Activated T-helper 2 cell treated with anti-CD3 and anti-CD28 coated beads, Interferon-gamma antibody, Interleukin-2, Interleukin-4, amounts not matched to agents 10 μg/mL and 5 μg/mL and 100 μg/mL, durations not matched to agents 14 hours and 24 hours and 36 hours (primary cell): ENCODE measurements at regions of chr7 and their contacts with region 1.

Region 1: DNA sequence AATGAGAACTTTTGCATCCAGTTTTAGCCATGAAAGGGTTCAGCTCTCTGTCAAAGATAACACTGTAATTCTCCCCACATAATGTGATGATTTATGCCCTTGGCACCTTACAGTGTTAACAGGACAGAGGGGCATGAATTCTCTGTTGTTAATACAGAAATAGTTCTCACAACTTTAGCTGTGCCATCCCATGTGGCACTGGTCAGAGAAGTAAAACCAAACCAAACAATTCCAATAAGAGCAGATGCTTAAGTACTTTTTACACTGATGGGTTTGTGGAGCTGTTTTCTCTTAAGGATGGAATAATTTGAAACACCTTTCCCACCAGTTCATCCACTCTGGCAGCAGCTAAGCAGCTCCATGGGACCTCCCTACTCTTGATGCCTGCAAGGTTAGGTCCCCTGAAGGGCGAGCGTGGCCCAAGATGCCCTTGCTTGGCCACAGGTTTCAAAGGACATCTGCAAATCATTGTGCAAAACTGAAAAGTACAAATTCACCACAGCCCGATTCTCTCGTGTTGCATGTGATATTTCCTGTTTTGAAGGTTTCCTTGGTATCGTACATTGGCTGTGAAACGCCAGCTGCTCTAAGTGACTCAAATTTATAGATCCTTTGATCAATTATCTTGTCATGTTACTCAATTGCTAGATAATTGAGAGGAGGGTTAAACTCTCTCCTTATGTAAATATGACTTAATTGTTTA is 82.5 kb upstream of the CREB5 start:
- DNase-seq: no peak
- H3K4me3 Mint-ChIP-seq: peak overlapping the region; percentile 31
- H3K27ac Mint-ChIP-seq: no peak overlapping the region
- H3K4me1 Mint-ChIP-seq: peaks cover 27% of the 10 kb centered on the region
- H3K27me3 Mint-ChIP-seq: peaks cover 8% of the 10 kb centered on the region

Region 2: DNA sequence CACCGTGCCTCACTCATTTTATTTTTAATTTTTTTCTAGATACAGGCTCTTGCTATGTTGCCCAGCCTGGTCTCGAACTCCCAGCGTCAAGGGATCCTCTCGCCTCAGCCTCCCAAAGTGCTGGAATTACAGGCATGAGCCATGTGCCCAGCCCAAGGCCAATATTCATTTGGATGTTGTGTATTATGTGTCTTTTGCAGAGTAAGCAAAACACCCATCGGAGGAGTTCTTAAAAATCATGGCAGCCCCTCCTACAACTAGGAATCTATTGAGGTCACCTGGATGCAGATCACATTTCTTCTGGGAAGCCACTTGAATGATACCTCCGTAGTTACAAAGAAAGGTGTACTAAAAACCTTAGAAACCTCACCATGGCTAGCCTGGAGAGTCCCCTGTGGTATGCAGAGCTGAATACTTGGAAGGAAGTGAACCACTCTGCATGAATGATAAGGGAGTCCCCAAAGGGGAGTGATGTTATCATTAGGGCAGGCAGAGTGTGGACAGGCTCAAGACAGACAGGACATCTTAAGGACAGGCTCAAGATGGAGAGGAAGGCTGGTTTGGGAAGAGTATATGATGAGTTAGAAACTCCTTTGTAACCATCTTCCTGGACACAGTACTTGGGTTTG is 404.1 kb before region 1 on chr7:
- intact Hi-C with region 1: no loop called
- DNase-seq: no peak
- H3K4me3 Mint-ChIP-seq: no peak overlapping the region
- H3K27ac Mint-ChIP-seq: no peak overlapping the region
- H3K4me1 Mint-ChIP-seq: no peaks in the 10 kb centered on the region
- H3K27me3 Mint-ChIP-seq: peaks cover 4% of the 10 kb centered on the region

Region 3: DNA sequence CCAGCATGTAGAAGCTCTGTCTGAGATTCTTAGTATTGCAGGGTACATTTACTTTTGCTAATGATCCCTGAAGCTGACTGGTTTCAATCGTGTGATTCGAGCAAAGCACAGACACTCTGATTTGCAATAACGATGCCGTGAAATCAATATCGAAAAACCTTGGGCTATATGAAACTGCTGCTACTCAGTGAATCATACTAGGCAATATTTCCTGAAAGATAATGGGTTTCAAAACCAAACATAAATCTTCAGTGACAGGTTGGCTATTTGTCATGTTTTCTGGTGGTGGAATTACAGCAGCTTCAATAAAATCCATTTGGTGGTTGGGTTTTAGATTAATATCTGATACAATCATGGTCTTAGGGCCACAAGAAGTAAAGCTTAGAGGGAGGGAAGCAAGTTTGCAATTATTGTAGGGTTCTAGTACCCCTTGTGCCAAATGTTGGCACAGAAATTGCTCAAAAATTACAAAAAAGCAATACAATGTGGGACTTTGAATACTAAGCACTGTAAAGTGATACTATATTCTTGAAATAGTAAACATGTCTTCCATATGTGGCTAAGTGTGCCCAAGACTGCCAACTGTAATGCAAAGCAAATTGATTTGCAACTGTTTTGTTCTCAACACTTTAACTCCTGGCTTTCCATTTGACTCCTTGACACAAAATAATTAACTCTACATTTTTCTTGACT is 36.8 kb before region 1 on chr7:
- intact Hi-C with region 1: loop called (anchors 1 kb)
- DNase-seq: no peak
- H3K4me3 Mint-ChIP-seq: no peak overlapping the region
- H3K27ac Mint-ChIP-seq: no peak overlapping the region
- H3K4me1 Mint-ChIP-seq: peaks cover 10% of the 10 kb centered on the region
- H3K27me3 Mint-ChIP-seq: peaks cover 46% of the 10 kb centered on the region